HepG2 (cell line): ENCODE measurements at regions of chr6 and their contacts with region 1.

Region 1: GRCh38 chr6:29942275-29943052 is at the start of gene HLA-A:
- DNase-seq: peak; percentile 94
- ATAC-seq: peak; percentile 98
- H3K4me3 ChIP-seq: peak within 1 kb of the TSS; percentile 77 to 82 (median 80)
- H3K27ac ChIP-seq: peak within 1 kb of the TSS; percentile 60
- H3K4me1 ChIP-seq: peaks cover 28% of the 10 kb centered on the region
- H3K27me3 ChIP-seq: no peaks in the 10 kb centered on the region
- CTCF ChIP-seq: no peak
- EP300 ChIP-seq: no peak
- POLR2A ChIP-seq: peak; percentile 87 to 90
- RAD21 ChIP-seq: no peak
- total RNA-seq, gene HLA-A: 131 and 345 TPM in 2 replicates

Region 2: DNA sequence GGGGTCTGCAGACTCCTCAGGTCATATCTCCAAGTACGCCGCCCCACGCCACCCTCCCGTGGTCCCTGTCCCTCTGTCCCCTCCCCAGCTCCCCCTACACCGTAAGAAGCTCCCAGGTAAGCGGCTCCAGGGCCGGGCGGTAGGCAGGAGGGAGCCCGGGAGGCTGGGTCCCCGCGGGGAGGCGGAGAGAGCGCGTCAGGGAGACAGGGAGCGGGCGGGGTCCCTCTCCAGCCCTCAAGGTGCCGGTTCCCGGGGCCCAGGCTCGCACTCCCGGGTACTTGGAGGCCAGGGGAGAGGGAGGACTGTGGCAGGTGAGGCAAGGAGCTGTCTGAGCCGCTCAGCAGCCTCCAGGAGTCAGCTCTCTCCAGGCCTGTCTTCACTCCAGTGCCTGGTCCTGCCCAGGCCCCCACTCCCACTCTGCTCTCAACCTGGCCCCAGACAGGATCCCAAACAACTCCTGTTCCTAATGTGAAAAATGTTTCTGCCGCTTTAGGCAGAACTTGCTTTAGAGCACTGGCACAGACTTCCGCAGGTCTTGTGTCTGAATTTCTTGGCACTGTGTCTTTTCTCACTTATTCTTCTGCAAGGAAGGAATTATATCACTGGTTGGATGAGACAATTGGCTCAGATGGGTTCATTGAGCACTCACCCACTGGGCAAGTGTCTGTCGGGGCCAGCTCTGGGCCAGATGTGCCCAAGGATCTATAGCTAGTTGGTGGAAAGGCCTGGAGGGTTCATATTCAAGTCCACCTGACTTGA is 78.2 kb before region 1 on chr6:
- CTCF ChIA-PET with region 1: no interaction called
- POLR2A ChIA-PET with region 1: no interaction called
- in situ Hi-C with region 1: loop called (anchors 10 kb)
- intact Hi-C with region 1: no loop called
- DNase-seq: no peak
- ATAC-seq: peak; percentile 38; the same call in 1 of the 3 replicates
- H3K4me3 ChIP-seq: no peak overlapping the region
- H3K27ac ChIP-seq: no peak overlapping the region
- H3K4me1 ChIP-seq: no peaks in the 10 kb centered on the region
- H3K27me3 ChIP-seq: peaks cover 4 to 39% of the 10 kb centered on the region in 2 experiments; a peak in 4 of 5 replicates
- CTCF ChIP-seq: no peak
- EP300 ChIP-seq: no peak
- POLR2A ChIP-seq: no peak
- RAD21 ChIP-seq: no peak

Region 3: DNA sequence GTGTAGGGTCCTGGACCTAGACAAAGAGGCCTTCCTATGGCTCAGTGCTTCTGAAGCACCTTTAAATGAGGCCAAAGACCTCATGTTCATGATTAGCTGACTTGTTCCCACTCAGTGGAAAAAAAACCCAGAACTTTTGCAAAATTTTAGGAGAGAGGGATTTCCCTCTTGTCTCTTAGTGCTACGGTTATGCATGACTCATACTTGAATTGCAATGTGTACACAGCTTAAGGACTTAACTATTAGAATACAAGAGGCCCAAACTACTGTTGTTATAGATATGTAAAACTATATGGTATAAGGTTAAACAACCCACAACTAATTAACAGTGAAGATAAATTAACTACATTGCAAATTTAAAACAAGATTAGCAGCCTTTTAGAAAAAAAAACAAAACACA is 32.5 kb before region 1 on chr6:
- CTCF ChIA-PET with region 1: no interaction called
- POLR2A ChIA-PET with region 1: no interaction called
- in situ Hi-C with region 1: no loop called
- intact Hi-C with region 1: loop called (anchors 1 kb)
- DNase-seq: no peak
- ATAC-seq: no peak
- H3K4me3 ChIP-seq: no peak overlapping the region
- H3K27ac ChIP-seq: no peak overlapping the region
- H3K4me1 ChIP-seq: peaks cover 79% of the 10 kb centered on the region
- H3K27me3 ChIP-seq: no peaks in the 10 kb centered on the region
- CTCF ChIP-seq: no peak
- EP300 ChIP-seq: no peak
- POLR2A ChIP-seq: no peak
- RAD21 ChIP-seq: no peak

Region 4: DNA sequence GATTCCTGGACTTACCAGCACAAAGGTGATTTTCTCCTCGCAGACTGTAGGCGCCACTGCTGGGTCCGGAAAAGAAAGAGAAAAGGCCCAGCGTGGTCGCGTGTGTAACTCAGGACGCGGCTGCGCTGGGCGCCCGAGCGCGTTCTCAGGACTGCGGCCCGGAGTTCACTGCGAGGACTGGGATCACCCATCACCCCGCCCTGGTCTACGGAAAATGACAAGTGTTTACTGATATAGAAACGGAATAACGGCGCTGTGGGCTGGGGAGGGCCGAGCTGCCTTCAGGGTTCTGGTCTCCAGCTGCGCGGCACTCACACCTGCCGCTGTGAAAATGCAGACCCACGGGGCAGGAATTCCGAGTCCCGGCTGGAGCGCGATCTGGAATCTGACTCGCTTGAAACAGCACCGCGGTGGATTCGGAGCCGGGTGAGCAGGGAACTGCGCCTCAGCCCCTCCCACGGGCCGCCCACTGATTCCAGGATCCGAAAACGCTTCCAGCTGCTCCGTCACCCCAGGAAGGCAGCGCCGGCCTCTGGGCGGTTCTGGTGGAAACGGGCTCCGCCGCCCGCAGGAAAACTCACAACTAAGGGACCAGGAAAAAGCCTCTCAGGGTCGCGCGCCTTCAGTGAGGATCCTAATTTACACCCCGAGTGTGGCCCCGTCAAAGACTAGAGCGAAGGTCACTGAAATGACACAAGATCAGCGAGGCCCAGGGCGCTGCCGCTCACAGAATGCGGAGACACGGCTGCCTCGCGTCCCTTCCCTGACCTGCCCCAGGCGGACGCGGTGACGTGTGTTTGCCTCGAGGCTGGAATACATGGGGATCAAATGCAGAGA is 34.3 kb after region 1 on chr6:
- CTCF ChIA-PET with region 1: no interaction called
- POLR2A ChIA-PET with region 1: interaction called, 4 read pairs
- in situ Hi-C with region 1: no loop called
- intact Hi-C with region 1: loop called (anchors 1 kb)
- DNase-seq: peak; percentile 77
- ATAC-seq: peak; percentile 93
- H3K4me3 ChIP-seq: peak overlapping the region; percentile 54 to 76 (median 65)
- H3K27ac ChIP-seq: peak overlapping the region; percentile 76
- H3K4me1 ChIP-seq: peaks cover 40% of the 10 kb centered on the region
- H3K27me3 ChIP-seq: no peaks in the 10 kb centered on the region
- CTCF ChIP-seq: peak; percentile 60
- EP300 ChIP-seq: 0 out of 4 replicates have a peak, but pooled peaks of 1 of the 2 experiments have one; percentile 19
- POLR2A ChIP-seq: peak; percentile 57 to 64; a peak in 3 of 4 replicates
- RAD21 ChIP-seq: peak; percentile 60